ENCODE measurements at regions of chr1 and their contacts with region 1.

Region 1: DNA sequence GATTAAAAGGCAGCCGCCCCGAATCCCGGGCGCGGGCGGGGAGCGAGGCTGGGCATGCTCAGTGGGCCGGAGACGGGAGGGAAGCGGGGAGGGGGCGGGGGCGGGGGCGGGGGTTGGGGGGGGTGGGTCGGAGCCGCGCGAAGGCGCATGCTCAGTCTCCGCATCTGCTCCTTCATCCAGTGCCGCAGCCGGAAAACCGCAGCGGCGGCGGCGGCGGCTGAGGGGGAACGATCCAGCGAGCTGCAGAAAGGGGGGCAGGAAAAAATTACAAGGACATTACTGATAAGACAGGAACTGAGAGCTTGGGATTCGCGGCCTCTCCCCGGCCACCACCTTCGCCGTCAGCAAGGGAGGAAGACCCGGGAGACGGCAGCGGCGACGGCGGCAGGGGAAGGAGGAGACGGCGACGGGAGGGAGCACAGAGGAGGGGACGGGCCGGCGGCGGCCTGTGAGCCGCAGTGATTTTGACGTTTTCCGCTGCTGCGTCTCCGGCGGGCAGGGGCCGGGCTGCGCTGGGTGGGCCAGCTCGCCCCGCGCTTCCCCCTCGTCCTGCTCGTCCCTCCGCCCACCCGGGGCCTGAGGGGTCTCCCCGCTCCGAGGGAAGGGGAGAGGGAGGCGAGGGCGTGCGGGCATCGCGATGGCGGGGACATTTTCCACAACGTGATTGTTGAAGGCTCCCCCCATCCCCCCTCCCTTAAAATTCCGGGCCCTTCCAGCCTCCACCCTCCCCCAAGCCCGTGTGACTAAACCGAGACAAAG is at the start of gene CAMSAP2:
- DNase-seq: peak; percentile 94 to 95 (median 95)
- H3K4me3 ChIP-seq: peak within 1 kb of the TSS; percentile 89
- H3K27ac ChIP-seq: peak within 1 kb of the TSS; percentile 98 to 100
- H3K4me1 ChIP-seq: peaks cover under 1% of the 10 kb centered on the region
- H3K27me3 ChIP-seq: no peaks in the 10 kb centered on the region
- CTCF ChIP-seq: no peak
- EP300 ChIP-seq: no peak
- POLR2A ChIP-seq: peak; percentile 84
- total RNA-seq, gene CAMSAP2: 25.8 to 44.5 (median 38.7) TPM

Region 2: GRCh38 chr1:199898654-199899053 is 840.3 kb before region 1 on chr1:
- intact Hi-C with region 1: no loop called
- DNase-seq: no peak
- H3K4me3 ChIP-seq: no peak overlapping the region
- H3K27ac ChIP-seq: no peak overlapping the region
- H3K4me1 ChIP-seq: no peaks in the 10 kb centered on the region
- H3K27me3 ChIP-seq: no peaks in the 10 kb centered on the region
- CTCF ChIP-seq: no peak
- EP300 ChIP-seq: no peak
- POLR2A ChIP-seq: no peak

Region 3: DNA sequence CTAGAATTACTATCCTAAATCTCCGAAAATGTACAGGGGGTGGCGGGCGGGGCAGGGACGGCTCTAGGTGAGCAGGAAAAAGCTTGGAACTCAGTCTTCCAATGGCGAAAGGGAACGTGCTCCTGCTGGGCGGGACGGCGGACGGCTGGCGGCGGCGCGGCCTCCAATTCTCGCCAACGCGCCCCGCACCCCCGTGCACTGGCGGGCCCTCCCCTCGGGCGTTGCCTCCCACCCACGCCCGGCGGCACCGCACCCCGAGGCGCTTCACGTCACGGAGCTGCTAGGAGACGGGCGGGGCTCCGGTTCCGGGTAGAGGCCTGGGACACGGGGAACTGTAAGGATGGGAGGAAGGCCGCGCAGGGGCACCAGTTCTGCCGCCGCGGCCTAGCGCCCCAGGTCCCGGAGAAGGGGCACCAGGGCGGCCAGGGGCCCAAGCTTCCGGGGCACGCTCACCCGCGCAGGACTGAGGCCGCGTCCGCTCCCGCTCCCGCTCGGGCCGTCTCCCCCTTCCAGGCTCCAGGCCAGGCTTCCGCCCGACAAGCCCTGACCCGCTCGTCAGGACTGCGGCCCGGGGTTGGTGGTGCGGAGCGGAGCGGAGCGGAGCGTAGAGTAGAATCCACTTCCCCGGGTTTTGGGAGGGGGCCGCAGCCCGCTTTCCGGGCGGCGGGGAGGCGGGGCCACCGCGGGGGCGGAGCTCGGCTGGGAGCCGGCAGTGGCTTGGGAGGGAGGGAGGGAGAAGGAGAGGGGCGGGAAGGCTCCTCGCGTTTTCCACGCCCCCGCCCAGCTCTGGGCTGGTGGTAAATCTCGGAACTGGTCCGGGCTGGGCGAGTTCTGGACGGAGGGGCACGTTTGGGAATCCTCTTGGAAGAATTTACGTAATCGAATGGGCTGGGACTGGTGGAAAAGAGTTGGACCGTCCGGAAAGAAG is 69.3 kb before region 1 on chr1 and contains the start of gene DDX59:
- intact Hi-C with region 1: loop called (anchors 5 to 10 kb)
- DNase-seq: peak; percentile 96 to 97 (median 97)
- H3K4me3 ChIP-seq: peak within 1 kb of the TSS; percentile 98
- H3K27ac ChIP-seq: peak within 1 kb of the TSS; percentile 86 to 97
- H3K4me1 ChIP-seq: peaks cover 10% of the 10 kb centered on the region
- H3K27me3 ChIP-seq: no peaks in the 10 kb centered on the region
- CTCF ChIP-seq: peak in 1 of 3 donors; percentile 59
- EP300 ChIP-seq: peak; percentile 76
- POLR2A ChIP-seq: peak; percentile 97
- total RNA-seq, gene DDX59: 16.4 to 25.6 (median 19.5) TPM

Measured in ovary (tissue), 10 donors.